ENCODE measurements at regions of chr11 and their contacts with region 1.

Region 1: GRCh38 chr11:58776891-58777710 is 45.4 kb upstream of the GLYAT start:
- DNase-seq: no peak
- H3K4me3 ChIP-seq: no peak overlapping the region
- H3K27ac ChIP-seq: no peak overlapping the region
- H3K4me1 ChIP-seq: no peaks in the 10 kb centered on the region
- H3K27me3 ChIP-seq: no peaks in the 10 kb centered on the region
- CTCF ChIP-seq: no peak

Region 2: DNA sequence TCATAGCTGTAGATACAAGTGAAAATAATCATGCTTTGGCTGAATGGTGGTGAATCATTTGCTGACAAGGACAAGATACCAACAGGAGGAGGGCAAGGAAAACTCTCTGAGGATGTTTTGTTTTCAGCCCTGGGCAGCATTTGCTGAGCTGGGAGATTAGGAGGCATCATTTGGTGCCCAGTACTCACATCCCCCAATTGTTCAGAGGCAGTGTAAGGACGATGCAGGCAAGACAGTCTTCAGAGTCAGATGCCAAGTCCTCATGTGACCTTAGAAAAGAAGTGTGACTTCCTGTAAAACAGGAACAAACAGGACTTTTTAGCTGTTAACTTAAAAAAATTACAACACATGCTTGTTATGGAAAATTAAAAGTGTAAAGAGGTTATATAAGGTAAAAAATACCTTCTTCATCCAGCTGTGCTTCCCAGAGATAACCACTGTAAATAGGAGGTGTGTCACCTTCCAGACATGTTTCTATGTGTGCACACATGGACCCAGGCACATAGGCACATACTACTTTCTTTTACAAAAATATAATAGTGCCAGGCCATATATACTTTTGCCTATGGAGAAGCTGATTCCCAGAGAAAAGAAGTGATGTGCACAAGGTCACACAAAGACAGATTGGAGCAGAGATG is 136.6 kb before region 1 on chr11:
- CTCF ChIA-PET with region 1: no interaction called
- dilution Hi-C with region 1: no loop called
- in situ Hi-C with region 1: no loop called
- intact Hi-C with region 1: no loop called
- DNase-seq: no peak
- H3K4me3 ChIP-seq: no peak overlapping the region
- H3K27ac ChIP-seq: no peak overlapping the region
- H3K4me1 ChIP-seq: no peaks in the 10 kb centered on the region
- H3K27me3 ChIP-seq: no peaks in the 10 kb centered on the region
- CTCF ChIP-seq: no peak

Region 3: GRCh38 chr11:58688789-58689503 is 88.2 kb before region 1 on chr11:
- CTCF ChIA-PET with region 1: no interaction called
- dilution Hi-C with region 1: loop called (anchors 5 kb)
- in situ Hi-C with region 1: no loop called
- intact Hi-C with region 1: no loop called
- DNase-seq: peak; percentile 91
- H3K4me3 ChIP-seq: no peak overlapping the region
- H3K27ac ChIP-seq: peak overlapping the region; percentile 45
- H3K4me1 ChIP-seq: peaks cover 18% of the 10 kb centered on the region
- H3K27me3 ChIP-seq: no peaks in the 10 kb centered on the region
- CTCF ChIP-seq: no peak

Region 4: DNA sequence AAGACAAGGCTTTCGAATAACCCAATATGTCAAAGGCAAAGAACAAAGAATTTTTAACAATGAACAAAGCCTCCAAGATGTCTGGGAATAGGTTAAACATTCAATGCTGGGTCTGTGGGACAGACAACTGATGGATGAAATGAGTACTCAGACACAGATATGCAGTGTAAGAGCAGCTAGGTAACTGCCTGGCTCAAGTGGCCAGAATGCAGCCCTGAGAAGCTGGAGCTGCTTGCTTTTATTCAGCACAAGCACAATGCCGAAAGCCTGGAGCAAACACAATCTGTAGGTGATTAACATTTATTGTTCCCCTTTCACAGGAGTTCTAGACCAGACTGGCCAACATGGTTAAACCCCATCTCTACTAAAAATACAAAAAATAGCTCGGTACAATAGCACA is 69.3 kb before region 1 on chr11:
- CTCF ChIA-PET with region 1: no interaction called
- dilution Hi-C with region 1: no loop called
- in situ Hi-C with region 1: no loop called
- intact Hi-C with region 1: no loop called
- DNase-seq: no peak
- H3K4me3 ChIP-seq: no peak overlapping the region
- H3K27ac ChIP-seq: no peak overlapping the region
- H3K4me1 ChIP-seq: no peaks in the 10 kb centered on the region
- H3K27me3 ChIP-seq: no peaks in the 10 kb centered on the region
- CTCF ChIP-seq: no peak

Region 5: DNA sequence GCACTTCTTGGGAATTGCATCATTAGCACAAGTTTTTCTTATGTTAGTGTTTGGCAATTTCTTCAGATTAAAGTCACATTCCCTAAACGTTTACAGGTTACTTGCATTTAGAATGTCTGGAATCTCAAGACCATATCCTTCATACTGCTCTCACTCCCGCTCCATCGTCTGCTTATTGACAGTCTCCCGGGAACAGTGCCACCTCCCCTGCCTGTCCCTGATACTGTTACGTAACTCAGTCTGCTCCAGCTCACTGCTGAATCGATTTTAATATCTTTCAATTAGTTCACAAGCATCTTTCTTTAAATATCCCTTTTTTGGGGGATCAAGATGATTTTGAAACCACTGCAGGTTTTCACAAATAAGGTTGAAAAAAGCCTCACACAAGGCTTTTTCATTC is 19.2 kb after region 1 on chr11:
- CTCF ChIA-PET with region 1: no interaction called
- dilution Hi-C with region 1: no loop called
- in situ Hi-C with region 1: no loop called
- intact Hi-C with region 1: no loop called
- DNase-seq: no peak
- H3K4me3 ChIP-seq: no peak overlapping the region
- H3K27ac ChIP-seq: no peak overlapping the region
- H3K4me1 ChIP-seq: no peaks in the 10 kb centered on the region
- H3K27me3 ChIP-seq: no peaks in the 10 kb centered on the region
- CTCF ChIP-seq: no peak

Measured in mammary epithelial cell (primary cell).